Activated B cell treated with CpG ODN at 0.5 μM for 24 hours (primary cell): ENCODE measurements at regions of chr12 and their contacts with region 1.

Region 1: DNA sequence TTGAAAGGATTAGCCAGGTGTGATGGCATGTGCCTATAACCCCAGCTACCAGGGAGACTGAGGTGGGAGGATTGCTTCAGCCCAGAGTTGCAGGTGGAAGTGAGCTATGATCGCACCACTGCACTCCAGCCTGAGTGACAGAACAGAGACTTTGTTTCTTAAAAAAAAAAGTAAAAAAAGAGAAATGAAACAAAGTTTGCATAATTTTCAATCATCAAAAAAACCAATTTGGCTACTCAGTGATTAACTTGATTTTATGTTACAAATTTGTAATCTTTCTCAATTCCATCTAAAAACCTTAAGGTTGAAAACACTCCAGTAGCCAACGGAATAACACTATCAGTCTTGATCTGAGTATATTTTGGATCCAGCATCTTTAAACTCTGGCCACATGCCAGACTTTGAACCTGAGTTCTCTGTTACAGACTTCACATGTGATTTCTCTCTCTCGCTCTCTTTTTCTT is 12.6 kb upstream of the DENND5B start:
- DNase-seq: peak; percentile 34
- ATAC-seq: peak; percentile 87
- H3K4me3 Mint-ChIP-seq: peak overlapping the region; percentile 61
- H3K27ac Mint-ChIP-seq: peak overlapping the region; percentile 92
- H3K4me1 Mint-ChIP-seq: peaks cover 59% of the 10 kb centered on the region
- H3K27me3 Mint-ChIP-seq: no peaks in the 10 kb centered on the region
- CTCF ChIP-seq: no peak

Region 2: DNA sequence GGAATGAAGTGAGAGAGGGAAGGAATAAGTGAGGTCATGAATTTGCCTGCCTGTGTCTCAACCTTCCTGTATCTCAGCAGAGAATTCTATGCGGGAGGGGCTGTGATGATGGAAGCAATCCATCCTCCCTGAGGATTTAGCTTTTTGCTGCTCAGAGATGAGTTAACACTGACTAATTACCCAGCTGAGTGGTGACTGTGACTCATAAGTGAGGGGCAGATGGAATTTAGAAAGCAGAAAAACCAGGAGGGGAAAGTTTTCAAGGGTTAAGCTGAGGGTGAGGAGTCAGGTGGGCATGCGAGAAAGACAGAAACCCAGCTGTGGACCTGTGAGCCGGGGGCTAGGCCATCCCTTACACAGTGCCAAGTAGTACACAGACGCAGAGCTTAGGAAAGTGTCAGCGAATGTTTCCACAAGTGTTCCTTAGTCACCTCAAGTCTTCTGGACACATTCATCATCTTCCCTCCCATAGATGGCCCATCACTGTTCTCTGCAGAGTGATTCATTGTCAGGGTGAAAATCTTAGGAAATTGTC is 1185.8 kb before region 1 on chr12:
- CTCF ChIA-PET with region 1: no interaction called
- POLR2A ChIA-PET with region 1: no interaction called
- intact Hi-C with region 1: no loop called
- DNase-seq: no peak
- ATAC-seq: no peak
- H3K4me3 Mint-ChIP-seq: no peak overlapping the region
- H3K27ac Mint-ChIP-seq: no peak overlapping the region
- H3K4me1 Mint-ChIP-seq: no peaks in the 10 kb centered on the region
- H3K27me3 Mint-ChIP-seq: no peaks in the 10 kb centered on the region
- CTCF ChIP-seq: no peak

Region 3: GRCh38 chr12:31629756-31630732 is 26.5 kb after region 1 on chr12:
- CTCF ChIA-PET with region 1: no interaction called
- POLR2A ChIA-PET with region 1: interaction called, 14 read pairs
- intact Hi-C with region 1: no loop called
- DNase-seq: no peak
- ATAC-seq: no peak
- H3K4me3 Mint-ChIP-seq: no peak overlapping the region
- H3K27ac Mint-ChIP-seq: peak overlapping the region; percentile 2
- H3K4me1 Mint-ChIP-seq: peaks cover 27% of the 10 kb centered on the region
- H3K27me3 Mint-ChIP-seq: no peaks in the 10 kb centered on the region
- CTCF ChIP-seq: no peak

Region 4: DNA sequence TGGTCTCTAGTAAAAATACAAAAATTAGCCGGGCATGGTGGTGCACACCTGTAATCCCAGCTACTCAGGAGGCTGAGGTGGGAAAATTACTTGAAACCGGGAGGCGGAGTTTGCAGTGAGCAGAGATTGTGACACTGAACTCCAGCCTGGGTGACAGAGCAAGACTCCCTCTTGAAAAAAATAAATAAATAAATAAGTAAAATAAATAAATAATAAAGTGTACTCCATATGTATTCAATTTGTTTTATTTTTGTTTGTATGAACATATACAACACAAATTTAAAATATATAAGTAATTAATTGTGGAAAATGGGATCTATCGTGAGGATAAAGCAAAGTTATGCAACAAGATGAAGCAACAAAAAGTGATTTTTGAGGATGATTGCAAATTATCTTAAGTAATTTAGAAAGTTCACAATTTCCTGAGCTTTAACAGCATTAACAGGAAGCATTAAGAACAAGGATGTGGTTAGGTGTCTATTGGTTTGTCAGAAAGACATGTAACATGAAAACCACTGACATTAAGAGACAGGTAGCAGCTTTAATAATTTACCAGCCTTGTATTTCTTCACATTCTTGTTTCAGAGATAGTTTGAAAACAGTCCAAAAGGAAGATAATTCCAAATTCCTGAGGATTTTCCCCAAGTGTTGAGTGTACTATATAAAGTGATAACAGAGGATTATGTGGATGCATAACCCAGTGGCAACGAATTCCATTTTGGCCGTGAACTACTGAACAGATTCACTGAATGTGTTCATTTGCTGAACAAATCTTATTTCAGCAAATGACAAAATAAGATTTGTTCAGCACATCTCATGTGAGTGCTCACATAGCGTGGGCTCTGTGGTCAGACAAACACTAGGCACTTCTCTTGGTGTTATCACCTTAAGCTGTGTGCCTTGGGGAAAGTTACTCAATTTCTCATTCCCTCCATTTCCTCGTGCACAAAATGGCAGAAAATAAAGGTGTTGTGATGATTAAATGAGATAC is 287.0 kb after region 1 on chr12:
- CTCF ChIA-PET with region 1: no interaction called
- POLR2A ChIA-PET with region 1: interaction called, 3 read pairs
- intact Hi-C with region 1: loop called (anchors 5 kb)
- DNase-seq: no peak
- ATAC-seq: peak; percentile 43
- H3K4me3 Mint-ChIP-seq: peak overlapping the region; percentile 45
- H3K27ac Mint-ChIP-seq: peak overlapping the region; percentile 82
- H3K4me1 Mint-ChIP-seq: peaks cover 71% of the 10 kb centered on the region
- H3K27me3 Mint-ChIP-seq: no peaks in the 10 kb centered on the region
- CTCF ChIP-seq: no peak